Naive thymus-derived CD4-positive, alpha-beta T cell (primary cell): ENCODE measurements at regions of chr13 and their contacts with region 1.

Region 1: DNA sequence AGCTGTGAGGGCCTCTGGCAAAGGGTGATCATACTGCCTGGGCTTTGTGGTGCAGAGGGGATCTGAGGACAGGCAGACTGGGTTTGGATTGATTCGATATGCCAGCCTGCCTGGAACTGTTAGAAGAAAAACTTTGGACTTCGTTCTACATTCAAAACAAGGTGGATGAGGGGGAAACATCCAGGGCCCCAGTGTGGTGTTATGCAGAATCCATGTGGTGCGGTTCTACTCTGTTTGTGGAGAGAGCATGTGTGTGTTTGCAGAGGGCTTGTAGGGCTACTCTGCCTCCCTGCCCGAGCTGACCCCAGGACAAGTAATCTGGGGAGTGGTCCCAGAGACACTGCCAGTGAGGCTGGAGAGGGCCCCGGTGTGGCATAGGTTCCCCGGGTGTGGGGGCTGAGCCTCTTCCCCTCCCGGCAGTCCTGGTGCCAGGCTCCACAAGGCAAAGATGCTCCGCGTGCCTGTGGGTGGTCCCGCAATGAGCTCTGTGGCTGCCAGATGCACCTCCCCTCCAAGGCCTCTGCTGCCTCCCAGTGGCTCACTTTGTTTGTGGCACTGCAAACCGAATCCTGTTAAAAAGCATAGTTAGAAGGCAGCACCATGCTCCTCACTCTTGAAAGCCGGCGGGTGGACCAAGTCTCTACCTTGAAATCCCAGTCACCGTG is 22.3 kb upstream of the TFDP1 start:
- DNase-seq: peak in 7 of 9 donors; percentile 14 to 43 (median 35)
- ATAC-seq: peak; percentile 67
- H3K4me3 ChIP-seq: no peak overlapping the region
- H3K4me3 Mint-ChIP-seq: no peak overlapping the region
- H3K27ac ChIP-seq: no peak overlapping the region
- H3K27ac Mint-ChIP-seq: peak overlapping the region in 1 of 9 donors; percentile 67
- H3K4me1 ChIP-seq: no peaks in the 10 kb centered on the region
- H3K4me1 Mint-ChIP-seq: peaks cover 0 to 5% (median 4%) of the 10 kb centered on the region in 7 donors
- H3K27me3 ChIP-seq: no peaks in the 10 kb centered on the region
- H3K27me3 Mint-ChIP-seq: peaks cover 0 to 14% (median 4%) of the 10 kb centered on the region in 5 donors

Region 2: GRCh38 chr13:113458253-113459065 is 103.8 kb before region 1 on chr13:
- CTCF ChIA-PET with region 1: no interaction called
- POLR2A ChIA-PET with region 1: no interaction called
- intact Hi-C with region 1: loop called in 1 of 2 experiments (anchors 2 kb)
- DNase-seq: no peak
- ATAC-seq: no peak
- H3K4me3 ChIP-seq: no peak overlapping the region
- H3K4me3 Mint-ChIP-seq: no peak overlapping the region
- H3K27ac ChIP-seq: no peak overlapping the region
- H3K27ac Mint-ChIP-seq: no peak overlapping the region
- H3K4me1 ChIP-seq: no peaks in the 10 kb centered on the region
- H3K4me1 Mint-ChIP-seq: no peaks in the 10 kb centered on the region
- H3K27me3 ChIP-seq: no peaks in the 10 kb centered on the region
- H3K27me3 Mint-ChIP-seq: no peaks in the 10 kb centered on the region